ENCODE measurements at regions of chr1 and their contacts with region 1.

Region 1: GRCh38 chr1:214029796-214030195 is 42.0 kb downstream of the PROX1 start:
- DNase-seq: no peak
- CTCF ChIP-seq: no peak

Region 2: DNA sequence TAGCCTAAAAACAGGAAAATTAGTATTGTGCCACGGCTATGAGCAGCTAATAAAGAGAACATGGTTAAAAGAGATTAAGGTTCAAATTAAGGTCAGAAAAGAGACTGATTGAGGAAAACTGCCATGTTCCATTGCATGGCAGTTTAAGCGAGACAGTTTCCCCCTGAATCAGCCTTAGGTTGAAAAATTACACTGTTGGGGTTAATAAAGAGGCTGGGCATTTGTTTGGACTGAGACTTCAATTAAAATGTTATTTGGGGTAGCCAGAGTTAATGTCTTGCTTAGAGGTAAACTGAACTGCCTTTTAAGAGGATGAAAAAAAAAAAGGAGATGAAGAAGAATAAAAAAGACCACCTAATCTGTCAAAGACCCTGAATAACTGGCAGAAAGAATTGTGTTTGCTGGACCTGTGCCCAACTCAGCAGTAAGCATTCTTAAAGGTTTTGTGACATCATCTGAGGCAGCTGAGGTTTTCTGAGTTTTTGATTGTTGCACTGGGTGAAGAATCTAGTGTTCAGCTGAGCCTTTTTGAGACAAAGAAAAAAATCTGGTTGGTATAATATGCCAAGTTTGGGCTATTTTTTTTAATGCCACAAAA is 59.7 kb before region 1 on chr1:
- in situ Hi-C with region 1: loop called (anchors 10 kb)
- DNase-seq: no peak
- CTCF ChIP-seq: no peak

Measured in GM13976 (cell line).